ENCODE measurements at regions of chr1 and their contacts with region 1.

Region 1: GRCh38 chr1:25695090-25695770 is 78.6 kb downstream of the MAN1C1 start:
- DNase-seq: peak; percentile 36
- H3K4me3 ChIP-seq: no peak overlapping the region
- H3K27ac ChIP-seq: no peak overlapping the region
- H3K4me1 ChIP-seq: peaks cover 12% of the 10 kb centered on the region
- H3K27me3 ChIP-seq: no peaks in the 10 kb centered on the region
- CTCF ChIP-seq: peak in 1 of 2 donors; percentile 16

Region 2: DNA sequence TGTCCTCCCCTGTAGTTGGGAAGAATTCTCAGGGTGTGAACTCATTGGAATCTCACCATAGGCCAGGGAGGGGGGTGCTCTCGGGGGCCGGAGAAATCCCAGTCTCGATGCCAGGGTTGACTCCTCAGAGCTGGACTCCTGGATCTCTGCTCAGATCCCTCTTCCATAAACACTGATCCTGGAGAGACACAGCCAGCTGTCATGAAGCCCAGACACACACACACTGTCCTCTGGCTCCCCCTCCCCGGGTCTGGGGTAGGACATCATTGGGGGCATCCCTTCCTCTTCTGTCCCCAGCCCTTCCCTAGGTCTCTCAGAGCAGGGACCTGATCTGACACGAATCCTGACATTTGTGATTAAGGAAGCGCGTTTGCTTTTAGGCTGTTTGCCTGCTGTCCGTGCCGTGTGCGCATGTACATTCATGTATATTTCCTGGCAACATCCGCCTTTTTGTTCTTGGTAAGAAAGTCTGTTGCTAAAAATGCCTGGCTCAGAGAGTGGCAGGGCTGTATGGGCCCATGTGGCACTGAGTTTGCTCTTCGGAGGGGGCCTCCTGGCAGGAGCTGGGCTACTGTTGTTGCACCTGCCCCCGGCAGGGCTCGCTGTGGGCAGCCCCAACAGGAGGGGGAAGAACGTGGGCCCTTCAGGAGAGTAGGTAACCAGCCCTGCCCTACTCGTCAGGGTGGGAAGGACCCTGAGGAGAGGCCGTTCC is 59.4 kb after region 1 on chr1:
- CTCF ChIA-PET with region 1: no interaction called
- dilution Hi-C with region 1: loop called (anchors 5 kb)
- in situ Hi-C with region 1: no loop called
- intact Hi-C with region 1: no loop called
- DNase-seq: no peak
- H3K4me3 ChIP-seq: no peak overlapping the region
- H3K27ac ChIP-seq: no peak overlapping the region
- H3K4me1 ChIP-seq: no peaks in the 10 kb centered on the region
- H3K27me3 ChIP-seq: peaks cover 3% of the 10 kb centered on the region
- CTCF ChIP-seq: no peak

Region 3: GRCh38 chr1:25780311-25781129 is 85.3 kb after region 1 on chr1:
- CTCF ChIA-PET with region 1: no interaction called
- dilution Hi-C with region 1: loop called (anchors 10 kb)
- in situ Hi-C with region 1: no loop called
- intact Hi-C with region 1: no loop called
- DNase-seq: no peak
- H3K4me3 ChIP-seq: no peak overlapping the region
- H3K27ac ChIP-seq: no peak overlapping the region
- H3K4me1 ChIP-seq: no peaks in the 10 kb centered on the region
- H3K27me3 ChIP-seq: no peaks in the 10 kb centered on the region
- CTCF ChIP-seq: no peak

Region 4: DNA sequence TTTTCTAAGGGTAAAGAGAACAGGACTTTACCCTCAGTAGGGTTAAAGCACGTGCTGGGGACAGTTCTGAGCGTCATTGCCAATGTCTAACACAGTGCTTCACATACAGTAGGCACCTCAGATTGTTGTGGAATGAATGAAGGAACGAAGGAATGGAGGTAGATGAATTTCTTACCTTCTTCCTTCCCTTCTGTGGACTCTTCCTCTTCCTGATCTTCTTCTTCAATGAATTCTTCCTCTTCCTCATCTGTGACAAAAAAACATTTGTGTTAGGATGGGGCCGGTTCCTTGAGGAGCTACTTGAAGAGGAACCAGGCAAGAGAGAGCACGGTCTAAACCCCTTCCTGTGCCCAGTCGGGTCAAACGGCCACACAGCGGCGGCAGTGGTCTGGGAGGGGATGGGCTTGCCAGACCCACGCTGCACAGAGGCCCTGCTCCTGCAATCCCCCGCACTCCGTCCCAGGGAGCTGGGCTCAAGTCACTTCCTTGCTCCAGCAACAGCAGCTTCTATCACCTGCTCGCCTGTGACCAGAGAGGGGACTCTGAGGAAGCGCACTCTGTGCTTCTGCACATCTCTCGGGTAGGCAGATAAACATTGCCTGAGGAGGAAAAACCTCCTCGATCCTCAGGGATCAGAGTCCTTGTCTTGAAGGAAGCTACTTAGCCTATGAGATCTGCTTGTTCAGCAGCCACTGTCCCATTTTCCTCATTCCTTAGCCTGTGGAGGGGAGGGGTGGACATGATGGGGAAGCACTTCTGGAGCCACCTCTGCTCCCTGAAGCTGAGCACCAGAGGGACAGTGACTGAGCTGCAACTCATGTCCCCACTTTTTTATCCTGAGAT is 358.7 kb after region 1 on chr1:
- CTCF ChIA-PET with region 1: no interaction called
- dilution Hi-C with region 1: no loop called
- in situ Hi-C with region 1: no loop called
- intact Hi-C with region 1: no loop called
- DNase-seq: no peak
- H3K4me3 ChIP-seq: no peak overlapping the region
- H3K27ac ChIP-seq: no peak overlapping the region
- H3K4me1 ChIP-seq: no peaks in the 10 kb centered on the region
- H3K27me3 ChIP-seq: no peaks in the 10 kb centered on the region
- CTCF ChIP-seq: no peak